Activated CD8-positive, alpha-beta T cell treated with anti-CD3 and anti-CD28 coated beads, Interleukin-2, amount 10 ng/mL, durations not matched to agents 7 days and 5 days (primary cell): ENCODE measurements at regions of chr6 and their contacts with region 1.

Region 1: GRCh38 chr6:125906158-125906998 is 50.2 kb upstream of the HINT3 start:
- DNase-seq: peak; percentile 59
- ATAC-seq: peak; percentile 45
- H3K4me3 Mint-ChIP-seq: no peak overlapping the region
- H3K27ac Mint-ChIP-seq: no peak overlapping the region
- H3K4me1 Mint-ChIP-seq: peaks cover 40% of the 10 kb centered on the region
- H3K27me3 Mint-ChIP-seq: no peaks in the 10 kb centered on the region

Region 2: DNA sequence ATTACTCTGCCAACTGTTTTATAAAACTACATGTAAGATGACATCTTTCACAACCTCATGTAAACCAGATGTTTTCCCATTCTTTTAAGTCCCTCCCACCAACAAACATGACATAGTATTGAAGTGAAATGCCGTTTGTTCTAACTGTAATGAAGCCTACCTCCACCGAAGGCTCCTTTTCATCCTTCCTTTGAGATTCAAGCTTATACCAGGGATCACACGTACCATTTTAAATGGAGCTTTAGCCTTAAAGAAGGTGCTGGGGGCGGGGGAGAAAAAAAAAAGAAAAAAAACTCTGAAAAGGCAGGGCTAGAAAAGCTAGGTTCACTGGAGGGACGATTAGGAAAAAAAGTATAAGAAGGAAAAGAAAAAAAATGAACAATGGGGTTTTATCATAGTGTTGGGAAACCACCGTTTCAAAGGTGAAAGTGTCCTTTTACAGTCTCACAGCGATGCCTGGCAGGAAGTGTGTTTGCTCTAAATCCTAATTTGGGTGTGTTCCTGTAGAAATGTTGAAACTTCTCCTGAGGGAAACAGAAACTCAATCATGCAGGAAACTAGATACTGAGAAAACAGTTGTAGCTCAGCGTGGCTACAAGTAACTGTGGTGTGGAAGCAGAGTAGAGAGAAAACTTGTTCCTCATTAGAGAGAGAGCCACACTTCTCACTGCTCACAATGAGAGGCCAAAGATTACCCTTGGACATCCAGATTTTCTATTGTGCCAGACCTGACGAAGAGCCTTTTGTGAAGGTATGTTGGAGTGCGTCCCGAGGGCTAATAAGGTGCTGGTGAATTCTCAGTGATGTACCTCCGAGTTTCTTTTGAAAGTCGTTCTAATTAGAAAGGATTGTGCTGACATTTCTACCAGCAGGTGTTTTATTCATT is 12.5 kb after region 1 on chr6:
- CTCF ChIA-PET with region 1: interaction called, 47 read pairs
- POLR2A ChIA-PET with region 1: no interaction called
- DNase-seq: peak; percentile 64
- ATAC-seq: peak; percentile 93
- H3K4me3 Mint-ChIP-seq: peak overlapping the region; percentile 75
- H3K27ac Mint-ChIP-seq: peak overlapping the region; percentile 87
- H3K4me1 Mint-ChIP-seq: peaks cover 40% of the 10 kb centered on the region
- H3K27me3 Mint-ChIP-seq: no peaks in the 10 kb centered on the region

Region 3: DNA sequence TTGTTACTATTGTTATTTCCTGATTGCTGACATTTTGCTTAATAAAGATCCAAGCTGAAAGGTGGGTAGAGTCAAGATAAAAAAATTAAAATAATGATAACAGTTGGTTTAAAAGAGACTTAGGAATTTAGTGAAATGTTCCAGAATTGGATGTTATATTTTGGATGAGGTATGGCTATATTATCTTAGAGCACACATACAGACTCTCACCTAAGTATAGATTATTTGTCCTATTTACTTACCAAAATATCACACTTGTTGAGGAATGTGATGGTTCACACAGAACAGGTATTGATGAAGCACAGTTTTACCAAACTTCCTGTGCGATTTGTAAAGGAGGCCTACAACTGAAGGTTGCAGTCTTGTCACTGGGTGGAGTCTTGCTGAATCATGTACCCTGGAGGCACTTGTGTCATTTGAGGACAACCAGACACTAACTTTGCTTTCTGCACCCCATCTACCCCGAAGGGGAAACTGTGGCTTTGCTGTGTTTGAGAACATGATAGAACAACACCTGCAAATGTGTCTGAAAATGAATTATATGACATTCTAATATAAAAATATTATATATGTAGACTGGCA is 17.7 kb after region 1 on chr6:
- CTCF ChIA-PET with region 1: interaction called, 47 read pairs
- POLR2A ChIA-PET with region 1: no interaction called
- DNase-seq: peak; percentile 41
- ATAC-seq: peak; percentile 65
- H3K4me3 Mint-ChIP-seq: no peak overlapping the region
- H3K27ac Mint-ChIP-seq: peak overlapping the region; percentile 81
- H3K4me1 Mint-ChIP-seq: peaks cover 45% of the 10 kb centered on the region
- H3K27me3 Mint-ChIP-seq: no peaks in the 10 kb centered on the region

Region 4: GRCh38 chr6:125974214-125974866 is 68.0 kb after region 1 on chr6:
- CTCF ChIA-PET with region 1: interaction called, 15 read pairs
- POLR2A ChIA-PET with region 1: no interaction called
- DNase-seq: no peak
- ATAC-seq: peak; percentile 81
- H3K4me3 Mint-ChIP-seq: no peak overlapping the region
- H3K27ac Mint-ChIP-seq: no peak overlapping the region
- H3K4me1 Mint-ChIP-seq: peaks cover 6% of the 10 kb centered on the region
- H3K27me3 Mint-ChIP-seq: no peaks in the 10 kb centered on the region